Dorsolateral prefrontal cortex (tissue), 120 donors: ENCODE measurements at regions of chr9 and their contacts with region 1.

Region 1: GRCh38 chr9:109969011-109969410 is 189.0 kb downstream of the PALM2AKAP2 start:
- DNase-seq: no peak
- H3K4me3 ChIP-seq: no peak overlapping the region
- H3K27ac ChIP-seq: peak overlapping the region in 29 of 59 donors; percentile 1 to 68 (median 45)
- H3K27me3 ChIP-seq: no peaks in the 10 kb centered on the region
- CTCF ChIP-seq: peak in 8 of 56 donors; percentile 7 to 25 (median 14)

Region 2: DNA sequence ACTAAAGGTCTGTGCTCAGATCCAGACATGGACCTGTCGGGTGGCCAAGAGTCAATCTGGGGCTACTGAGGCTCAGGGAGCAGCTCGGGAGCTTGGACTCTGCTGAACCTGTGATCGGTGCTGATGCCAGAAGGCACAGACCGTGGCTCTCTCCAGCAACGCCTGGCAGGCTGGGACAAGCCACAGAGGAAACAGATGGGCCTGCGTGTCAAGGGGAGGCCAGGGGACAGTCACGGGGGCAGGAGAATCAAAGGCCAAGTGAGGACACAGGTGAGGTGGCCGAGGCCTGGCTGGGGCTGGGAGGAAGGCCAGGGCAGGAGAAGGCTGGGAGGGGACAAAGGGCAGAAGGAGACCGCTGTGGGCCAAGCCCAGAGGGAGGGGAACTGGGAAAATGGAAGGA is 691.6 kb before region 1 on chr9:
- intact Hi-C with region 1: no loop called
- DNase-seq: peak in 1 of 10 donors; percentile 87
- H3K4me3 ChIP-seq: no peak overlapping the region
- H3K27ac ChIP-seq: no peak overlapping the region
- H3K27me3 ChIP-seq: no peaks in the 10 kb centered on the region
- CTCF ChIP-seq: no peak

Region 3: DNA sequence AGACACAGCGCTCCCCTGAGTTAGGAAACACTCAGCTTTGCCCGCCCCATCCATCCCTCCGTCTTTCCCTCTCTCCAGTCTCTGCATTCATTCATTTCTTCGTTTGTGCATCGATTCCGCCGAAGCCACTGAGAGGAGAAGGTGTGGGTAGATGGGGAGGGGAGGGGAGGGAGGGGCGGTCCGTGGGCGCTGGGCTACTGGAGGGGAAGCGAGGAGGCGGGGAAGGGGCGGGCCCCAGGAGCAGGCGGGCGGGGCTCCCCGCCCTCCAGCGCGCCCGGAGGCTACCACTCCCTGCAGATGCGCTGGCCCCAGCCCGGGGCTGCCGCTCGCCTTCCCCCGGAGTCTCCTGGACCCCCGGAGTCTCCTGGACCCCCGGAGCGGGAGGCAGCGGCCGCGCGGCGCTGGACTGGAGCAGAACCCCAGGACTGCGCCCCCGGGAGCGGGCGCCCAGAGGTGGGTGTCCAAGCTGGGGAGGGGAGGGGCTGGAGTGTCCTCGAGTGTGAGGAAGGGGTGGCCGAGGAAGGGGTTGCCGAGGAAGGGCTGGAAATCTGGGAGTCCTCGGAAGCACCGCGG is 79.5 kb after region 1 on chr9:
- intact Hi-C with region 1: loop called in 1 of 2 experiments (anchors 5 kb)
- DNase-seq: peak in 5 of 10 donors; percentile 32 to 71 (median 65)
- H3K4me3 ChIP-seq: peak overlapping the region; percentile 42 to 82 (median 69)
- H3K27ac ChIP-seq: peak overlapping the region in 23 of 59 donors; percentile 2 to 76 (median 44)
- H3K27me3 ChIP-seq: no peaks in the 10 kb centered on the region
- CTCF ChIP-seq: no peak

Region 4: DNA sequence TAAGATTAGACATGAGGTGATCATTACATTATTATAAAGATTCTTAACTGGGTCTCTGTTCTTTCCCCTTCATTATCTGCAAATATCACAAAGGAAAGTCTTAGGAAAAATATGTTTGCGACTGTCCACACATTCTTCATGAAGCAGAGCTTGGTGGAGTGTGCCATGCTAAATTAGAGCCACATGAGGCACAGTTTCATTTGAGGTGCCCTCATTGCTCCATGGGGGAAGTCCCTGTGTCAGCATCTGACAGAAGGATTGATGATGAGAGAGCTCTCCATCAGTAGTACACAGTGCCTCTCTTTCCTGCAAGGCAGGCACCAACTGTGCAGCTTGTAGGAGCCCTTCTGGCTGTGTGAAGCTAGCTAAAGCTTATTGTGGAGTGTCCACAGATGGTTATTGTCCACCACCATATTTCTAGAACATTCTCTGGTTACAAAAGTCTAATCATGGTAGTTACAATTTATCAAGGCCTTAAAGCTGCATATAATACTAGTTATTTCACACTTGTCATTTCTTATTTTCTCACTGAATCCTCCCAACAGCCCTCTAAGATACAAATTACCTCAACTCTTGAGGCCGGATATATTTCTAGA is 175.0 kb after region 1 on chr9:
- intact Hi-C with region 1: loop called in 1 of 2 experiments (anchors 5 kb)
- DNase-seq: no peak
- H3K4me3 ChIP-seq: no peak overlapping the region
- H3K27ac ChIP-seq: peak overlapping the region in 9 of 59 donors; percentile 11 to 50 (median 23)
- H3K27me3 ChIP-seq: no peaks in the 10 kb centered on the region
- CTCF ChIP-seq: no peak